ENCODE measurements at regions of chr1 and their contacts with region 1.

Region 1: DNA sequence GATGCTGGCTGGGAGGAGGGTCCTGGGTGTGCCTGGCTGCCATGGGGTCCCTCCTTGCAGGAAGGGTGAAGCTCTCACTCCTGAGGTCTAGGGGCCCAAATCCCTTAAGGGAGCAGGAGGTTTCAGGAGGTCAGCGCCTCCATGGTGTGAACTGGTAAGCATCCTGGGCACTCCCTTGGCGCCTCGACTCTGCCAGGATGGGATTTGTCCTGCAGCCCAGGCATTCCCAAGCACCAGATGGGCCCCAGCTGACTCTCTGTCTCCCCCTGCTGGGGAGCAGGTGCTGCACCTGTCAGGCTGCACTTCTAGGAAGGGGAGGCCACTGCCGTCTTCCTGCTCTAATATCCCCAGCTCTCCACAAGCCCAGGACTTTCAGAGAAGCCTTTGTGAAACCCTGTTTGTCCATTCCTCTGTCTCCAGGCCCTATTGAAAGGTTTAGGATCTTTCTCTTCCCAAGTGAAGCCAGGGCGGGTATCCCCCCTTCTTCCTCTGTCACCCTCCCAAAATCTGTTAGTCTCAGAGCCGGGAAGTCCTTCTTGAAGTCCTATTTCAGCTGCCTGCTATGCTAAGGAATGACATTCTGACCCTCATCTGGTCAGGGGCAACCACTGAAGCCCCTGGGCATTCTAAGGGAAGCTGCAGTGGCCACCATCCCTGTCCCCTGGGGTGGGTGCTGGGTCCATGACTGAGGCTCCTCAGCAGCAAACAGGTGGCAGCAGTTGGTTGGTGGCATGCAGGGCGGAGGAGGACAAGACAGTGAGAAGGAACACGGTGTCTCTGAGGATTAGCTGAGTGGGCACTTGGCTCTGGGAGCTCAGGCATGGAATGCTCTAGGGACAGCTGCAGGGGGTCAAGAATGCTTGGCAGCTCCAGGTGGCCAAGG is 3.3 kb downstream of the MYBPH start:
- DNase-seq: peak; percentile 42 to 61 (median 43)
- H3K4me3 ChIP-seq: no peak overlapping the region
- H3K27ac ChIP-seq: no peak overlapping the region
- H3K4me1 ChIP-seq: peaks cover 0 to 13% (median 2%) of the 10 kb centered on the region in 4 experiments
- H3K27me3 ChIP-seq: peaks cover 0 to 5% (median 0%) of the 10 kb centered on the region in 5 experiments

Region 2: GRCh38 chr1:203186446-203187303 is 14.3 kb after region 1 on chr1 and contains the start of gene CHI3L1:
- CTCF ChIA-PET with region 1: interaction called, 25 read pairs
- POLR2A ChIA-PET with region 1: no interaction called
- DNase-seq: peak in 2 of 3 donors; percentile 43 to 48
- H3K4me3 ChIP-seq: peak within 1 kb of the TSS in 1 of 7 experiments; percentile 19
- H3K27ac ChIP-seq: no peak within 1 kb of the TSS
- H3K4me1 ChIP-seq: peaks cover 0 to 14% (median 9%) of the 10 kb centered on the region in 4 experiments
- H3K27me3 ChIP-seq: peaks cover 0 to 2% (median 0%) of the 10 kb centered on the region in 5 experiments

Region 3: GRCh38 chr1:203229471-203230135 is 57.2 kb after region 1 on chr1 and contains the start of gene CHIT1:
- CTCF ChIA-PET with region 1: interaction called, 10 read pairs
- POLR2A ChIA-PET with region 1: no interaction called
- DNase-seq: no peak
- H3K4me3 ChIP-seq: no peak within 1 kb of the TSS
- H3K27ac ChIP-seq: no peak within 1 kb of the TSS
- H3K4me1 ChIP-seq: peaks cover 0 to 7% (median 2%) of the 10 kb centered on the region in 4 experiments
- H3K27me3 ChIP-seq: no peaks in the 10 kb centered on the region

Region 4: GRCh38 chr1:203326830-203327683 is 154.7 kb after region 1 on chr1:
- CTCF ChIA-PET with region 1: no interaction called
- POLR2A ChIA-PET with region 1: no interaction called
- DNase-seq: peak; percentile 94 to 98 (median 98)
- H3K4me3 ChIP-seq: peak overlapping the region in 5 of 7 experiments; percentile 35 to 63 (median 54)
- H3K27ac ChIP-seq: peak overlapping the region; percentile 75 to 88
- H3K4me1 ChIP-seq: peaks cover 32 to 70% (median 59%) of the 10 kb centered on the region in 4 experiments
- H3K27me3 ChIP-seq: no peaks in the 10 kb centered on the region

Measured in common myeloid progenitor, CD34-positive (primary cell).